GM12878 (cell line): ENCODE measurements at regions of chr2 and their contacts with region 1.

Region 1: DNA sequence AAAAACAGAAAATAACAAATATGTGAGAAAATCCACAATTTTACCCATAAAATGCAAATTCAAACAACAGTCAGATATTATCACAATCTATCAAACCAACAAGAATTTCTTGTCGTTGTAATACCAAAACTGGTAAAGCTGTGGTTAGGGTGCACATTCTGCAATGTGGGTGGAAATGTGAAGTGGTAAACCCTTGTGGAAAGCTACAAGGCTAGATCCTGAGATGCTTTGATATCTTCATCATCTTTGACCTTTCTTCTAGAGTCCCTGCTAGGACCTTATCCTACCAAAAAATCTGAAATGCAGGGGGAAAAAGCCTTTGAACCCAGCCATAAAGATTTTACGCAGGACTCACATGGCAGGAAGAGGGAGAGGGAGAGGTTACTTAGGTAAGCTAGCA is 17.2 kb upstream of the ATG16L1 start:
- DNase-seq: no peak
- ATAC-seq: peak; percentile 38; the same call in 1 of the 3 replicates
- H3K4me3 ChIP-seq: no peak overlapping the region
- H3K27ac ChIP-seq: no peak overlapping the region
- H3K4me1 ChIP-seq: peaks cover 7% of the 10 kb centered on the region
- H3K27me3 ChIP-seq: no peaks in the 10 kb centered on the region
- CTCF ChIP-seq: no peak
- EP300 ChIP-seq: no peak
- POLR2A ChIP-seq: no peak
- RAD21 ChIP-seq: no peak

Region 2: GRCh38 chr2:232731470-232731869 is 502.8 kb before region 1 on chr2:
- CTCF ChIA-PET with region 1: no interaction called
- POLR2A ChIA-PET with region 1: interaction called, 10 read pairs
- RAD21 ChIA-PET with region 1: no interaction called
- SMC1A ChIA-PET with region 1: no interaction called
- in situ Hi-C with region 1: no loop called
- intact Hi-C with region 1: no loop called
- DNase-seq: no peak
- ATAC-seq: no peak
- H3K4me3 ChIP-seq: no peak overlapping the region
- H3K27ac ChIP-seq: no peak overlapping the region
- H3K4me1 ChIP-seq: no peaks in the 10 kb centered on the region
- H3K27me3 ChIP-seq: no peaks in the 10 kb centered on the region
- CTCF ChIP-seq: no peak
- EP300 ChIP-seq: no peak
- POLR2A ChIP-seq: no peak
- RAD21 ChIP-seq: no peak

Region 3: GRCh38 chr2:233385489-233386044 is 151.3 kb after region 1 on chr2:
- CTCF ChIA-PET with region 1: no interaction called
- POLR2A ChIA-PET with region 1: no interaction called
- RAD21 ChIA-PET with region 1: no interaction called
- SMC1A ChIA-PET with region 1: no interaction called
- in situ Hi-C with region 1: no loop called
- intact Hi-C with region 1: no loop called
- DNase-seq: peak; percentile 63
- ATAC-seq: peak; percentile 82
- H3K4me3 ChIP-seq: peak overlapping the region; percentile 24
- H3K27ac ChIP-seq: peak overlapping the region; percentile 96
- H3K4me1 ChIP-seq: peaks cover 56% of the 10 kb centered on the region
- H3K27me3 ChIP-seq: no peaks in the 10 kb centered on the region
- CTCF ChIP-seq: no peak
- EP300 ChIP-seq: no peak
- POLR2A ChIP-seq: peak; percentile 60
- RAD21 ChIP-seq: 0 out of 2 replicates have a peak, but pooled peaks have one; percentile 3